Activated T-helper 1 cell treated with anti-CD3 and anti-CD28 coated beads, Interleukin-12 subunit alpha, Interleukin-12 subunit beta, Interleukin-2, Interleukin-4 antibody, amounts not matched to agents 30 ng/mL and 10 ng/mL and 1 ng/mL, durations not matched to agents 14 hours and 24 hours and 36 hours (primary cell): ENCODE measurements at regions of chr13 and their contacts with region 1.

Region 1: GRCh38 chr13:27171827-27172494 is 350 bp upstream of the USP12 start:
- DNase-seq: peak; percentile 92
- H3K4me3 Mint-ChIP-seq: peak overlapping the region; percentile 81
- H3K27ac Mint-ChIP-seq: peak overlapping the region; percentile 87
- H3K4me1 Mint-ChIP-seq: peaks cover 53% of the 10 kb centered on the region
- H3K27me3 Mint-ChIP-seq: no peaks in the 10 kb centered on the region

Region 2: GRCh38 chr13:26985285-26985878 is 186.6 kb before region 1 on chr13:
- intact Hi-C with region 1: loop called (anchors 2 kb)
- DNase-seq: peak; percentile 61
- H3K4me3 Mint-ChIP-seq: no peak overlapping the region
- H3K27ac Mint-ChIP-seq: no peak overlapping the region
- H3K4me1 Mint-ChIP-seq: peaks cover 19% of the 10 kb centered on the region
- H3K27me3 Mint-ChIP-seq: peaks cover 7% of the 10 kb centered on the region

Region 3: GRCh38 chr13:27086599-27087265 is 85.2 kb before region 1 on chr13:
- intact Hi-C with region 1: loop called (anchors 5 kb)
- DNase-seq: no peak
- H3K4me3 Mint-ChIP-seq: no peak overlapping the region
- H3K27ac Mint-ChIP-seq: peak overlapping the region; percentile 77
- H3K4me1 Mint-ChIP-seq: peaks cover 7% of the 10 kb centered on the region
- H3K27me3 Mint-ChIP-seq: no peaks in the 10 kb centered on the region

Region 4: DNA sequence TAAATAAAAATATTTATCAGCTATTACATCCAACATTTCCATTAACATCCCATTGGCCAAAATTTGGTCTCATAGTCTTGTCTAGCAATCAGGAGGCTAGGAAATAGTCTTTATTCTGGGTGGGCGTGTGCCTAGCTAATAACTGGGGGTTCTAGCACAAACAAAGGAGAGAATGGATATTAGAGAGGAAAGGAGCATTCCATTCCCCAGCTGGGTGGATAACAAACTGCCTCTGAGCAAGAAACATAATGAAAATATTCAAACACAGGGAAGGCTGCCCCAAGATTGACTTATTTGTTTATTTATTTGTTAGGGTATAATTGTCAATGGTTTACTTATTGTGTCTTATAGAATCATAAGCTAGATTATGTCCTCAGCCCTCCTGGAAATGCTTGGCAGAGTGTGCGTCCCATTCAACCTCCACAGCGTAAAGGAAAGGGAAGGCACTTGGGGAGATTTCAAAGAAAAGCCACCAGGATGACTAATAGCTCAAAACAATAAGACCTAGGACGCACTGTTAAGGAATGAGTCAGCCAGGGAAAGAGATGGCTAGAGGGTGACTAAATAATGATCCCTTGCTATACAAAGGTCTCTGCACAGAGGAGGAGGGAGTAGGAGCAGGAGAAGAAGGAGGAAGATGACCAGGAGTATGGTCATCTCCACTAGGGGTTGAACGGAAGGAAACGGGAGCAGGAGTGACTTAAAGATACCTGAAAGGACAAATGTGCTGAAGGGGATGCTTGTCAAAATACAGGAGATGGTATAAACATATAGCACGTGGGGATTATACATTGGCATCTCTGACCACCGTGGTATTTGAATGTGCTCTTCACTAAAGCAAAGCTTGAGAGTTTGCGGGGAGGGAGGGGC is 23.2 kb after region 1 on chr13:
- intact Hi-C with region 1: loop called (anchors 2 kb)
- DNase-seq: no peak
- H3K4me3 Mint-ChIP-seq: no peak overlapping the region
- H3K27ac Mint-ChIP-seq: peak overlapping the region; percentile 51
- H3K4me1 Mint-ChIP-seq: peaks cover 36% of the 10 kb centered on the region
- H3K27me3 Mint-ChIP-seq: peaks cover 8% of the 10 kb centered on the region

Region 5: GRCh38 chr13:27283906-27284493 is 112.0 kb after region 1 on chr13:
- intact Hi-C with region 1: no loop called
- DNase-seq: no peak
- H3K4me3 Mint-ChIP-seq: no peak overlapping the region
- H3K27ac Mint-ChIP-seq: no peak overlapping the region
- H3K4me1 Mint-ChIP-seq: no peaks in the 10 kb centered on the region
- H3K27me3 Mint-ChIP-seq: no peaks in the 10 kb centered on the region

Region 6: GRCh38 chr13:27353166-27353583 is 181.2 kb after region 1 on chr13:
- intact Hi-C with region 1: loop called (anchors 1 kb)
- DNase-seq: peak; percentile 34
- H3K4me3 Mint-ChIP-seq: no peak overlapping the region
- H3K27ac Mint-ChIP-seq: peak overlapping the region; percentile 40
- H3K4me1 Mint-ChIP-seq: peaks cover 15% of the 10 kb centered on the region
- H3K27me3 Mint-ChIP-seq: peaks cover 7% of the 10 kb centered on the region

Region 7: DNA sequence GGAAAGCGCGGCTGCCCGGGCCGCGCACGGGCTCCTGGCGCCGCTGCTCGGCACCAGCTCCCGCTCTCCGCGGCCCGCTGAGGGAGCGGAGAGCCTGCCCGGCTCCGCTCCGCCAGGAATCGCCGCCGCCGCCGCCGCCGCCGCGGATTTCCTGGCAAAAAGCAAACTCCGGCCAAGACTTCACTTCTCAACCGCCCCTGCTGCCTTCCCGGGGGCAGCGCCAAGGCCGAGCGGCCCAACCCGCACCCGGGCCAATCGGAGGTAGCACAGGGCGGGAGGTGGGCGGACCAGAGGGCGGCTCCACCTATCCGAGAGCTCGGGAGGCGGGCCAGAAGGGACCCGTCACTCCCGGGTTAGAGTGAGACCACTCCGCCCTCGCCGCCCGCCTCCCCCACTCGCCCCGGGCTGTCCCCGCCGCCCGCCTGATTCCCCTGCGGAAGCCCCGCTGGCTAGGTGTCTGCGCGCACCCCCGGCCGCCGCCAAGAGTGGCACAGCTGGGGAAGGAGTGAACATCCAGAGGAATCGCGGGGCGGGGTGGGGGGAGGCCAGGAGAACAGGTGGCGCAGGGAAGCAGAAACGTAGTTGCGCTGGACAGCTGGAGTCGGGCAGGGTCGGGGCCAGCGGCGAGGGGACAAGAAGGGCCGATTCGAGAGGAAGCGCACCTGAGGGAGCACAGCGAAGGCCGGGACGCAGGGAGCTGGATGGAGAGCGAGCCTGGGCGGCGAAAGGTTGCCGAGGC is 448.6 kb after region 1 on chr13 and contains the start of gene LNX2:
- intact Hi-C with region 1: loop called (anchors 5 kb)
- DNase-seq: peak; percentile 97
- H3K4me3 Mint-ChIP-seq: peak within 1 kb of the TSS; percentile 88
- H3K27ac Mint-ChIP-seq: peak within 1 kb of the TSS; percentile 88
- H3K4me1 Mint-ChIP-seq: peaks cover 57% of the 10 kb centered on the region
- H3K27me3 Mint-ChIP-seq: no peaks in the 10 kb centered on the region
- total RNA-seq, gene LNX2: 4.1 and 4.5 TPM in 2 replicates

Region 8: DNA sequence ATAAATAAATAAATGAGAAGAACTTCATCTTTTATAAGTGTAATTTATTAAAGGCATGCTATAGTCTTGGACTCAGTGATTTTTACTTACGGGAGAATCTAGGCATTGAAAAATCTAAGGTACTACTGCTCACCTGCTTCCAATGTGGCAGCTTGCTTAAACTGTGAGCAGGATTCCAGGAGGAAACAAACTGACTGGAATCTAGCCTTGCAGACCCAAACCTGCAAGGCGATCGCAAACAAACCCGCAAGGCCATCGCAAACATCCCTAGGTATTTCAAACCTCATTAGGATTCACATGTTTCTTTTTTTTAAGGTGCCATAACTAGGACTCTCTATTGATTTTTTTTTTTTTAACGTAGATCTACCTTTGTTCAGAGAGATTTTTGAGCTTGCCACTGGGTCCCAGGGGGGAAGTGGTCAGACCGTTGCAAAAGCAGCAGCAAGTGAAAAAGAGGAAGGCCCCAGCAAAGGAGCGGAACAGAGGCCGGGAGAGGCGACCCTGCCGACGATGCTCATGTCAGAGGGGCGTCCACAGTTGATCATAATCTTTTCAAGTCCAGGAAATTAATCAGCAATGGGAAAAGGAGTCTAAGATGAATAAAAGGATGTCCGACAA is 1355.6 kb after region 1 on chr13:
- intact Hi-C with region 1: no loop called
- DNase-seq: no peak
- H3K4me3 Mint-ChIP-seq: no peak overlapping the region
- H3K27ac Mint-ChIP-seq: no peak overlapping the region
- H3K4me1 Mint-ChIP-seq: peaks cover 6% of the 10 kb centered on the region
- H3K27me3 Mint-ChIP-seq: peaks cover 16% of the 10 kb centered on the region